HCT116 (cell line): ENCODE measurements at regions of chr2 and their contacts with region 1.

Region 1: DNA sequence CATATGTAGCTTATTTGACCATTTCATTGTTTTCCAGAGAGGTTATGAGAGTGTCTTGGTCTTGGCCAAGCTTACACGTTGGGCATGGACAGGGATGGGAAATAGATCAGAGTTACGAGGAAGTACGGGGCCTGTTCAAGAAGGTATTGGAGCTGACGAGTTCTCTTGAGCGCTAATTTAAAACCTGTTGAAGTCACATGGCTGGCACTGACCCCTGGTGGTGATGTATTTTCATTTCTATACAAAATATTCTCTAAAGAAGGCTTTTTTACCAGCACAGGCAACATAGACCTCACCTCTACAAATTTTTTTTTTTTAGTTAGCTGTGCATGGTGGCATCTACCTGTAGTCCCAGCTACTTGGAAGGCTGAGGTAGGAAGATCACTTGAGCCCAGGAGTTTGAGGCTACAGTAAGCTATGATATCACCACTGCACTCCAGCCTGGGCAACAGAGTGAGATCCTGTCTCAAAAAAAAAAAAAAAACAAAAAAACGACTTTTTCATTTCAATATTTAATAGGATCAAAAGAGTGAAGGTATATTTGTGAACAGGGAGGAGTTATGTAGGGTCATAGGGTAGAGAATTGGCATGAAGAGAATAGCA is 19.6 kb downstream of the UGP2 start:
- DNase-seq: peak; percentile 51
- ATAC-seq: peak; percentile 69
- H3K4me3 ChIP-seq: no peak overlapping the region
- H3K27ac ChIP-seq: no peak overlapping the region
- H3K4me1 ChIP-seq: peaks cover 11 to 17% of the 10 kb centered on the region in 2 experiments
- H3K27me3 ChIP-seq: no peaks in the 10 kb centered on the region
- CTCF ChIP-seq: peak; percentile 45 to 58 (median 57); a peak in 4 of 6 replicates
- POLR2A ChIP-seq: no peak
- RAD21 ChIP-seq: peak; percentile 69

Region 2: GRCh38 chr2:63588385-63589147 is 272.8 kb before region 1 on chr2 and contains the starts of genes MDH1 and WDPCP:
- CTCF ChIA-PET with region 1: no interaction called
- POLR2A ChIA-PET with region 1: no interaction called
- RAD21 ChIA-PET with region 1: no interaction called
- intact Hi-C with region 1: loop called (anchors 5 kb)
- DNase-seq: peak; percentile 100
- ATAC-seq: peak; percentile 91
- H3K4me3 ChIP-seq: peak within 1 kb of the TSS; percentile 71 to 89
- H3K27ac ChIP-seq: peak within 1 kb of the TSS; percentile 70
- H3K4me1 ChIP-seq: peaks cover 10 to 21% of the 10 kb centered on the region in 2 experiments; a peak in 3 of 4 replicates
- H3K27me3 ChIP-seq: no peaks in the 10 kb centered on the region
- CTCF ChIP-seq: no peak
- POLR2A ChIP-seq: peak; percentile 85
- RAD21 ChIP-seq: no peak; the same call in 1 of the 2 replicates
- total RNA-seq, gene MDH1: 192 TPM
- total RNA-seq, gene WDPCP: 4.1 TPM

Region 3: GRCh38 chr2:63692002-63692606 is 169.2 kb before region 1 on chr2:
- CTCF ChIA-PET with region 1: interaction called, 12 read pairs
- POLR2A ChIA-PET with region 1: no interaction called
- RAD21 ChIA-PET with region 1: interaction called in 1 of 2 experiments, 7 read pairs
- intact Hi-C with region 1: loop called (anchors 1 kb)
- DNase-seq: peak; percentile 31
- ATAC-seq: peak; percentile 67
- H3K4me3 ChIP-seq: no peak overlapping the region
- H3K27ac ChIP-seq: no peak overlapping the region
- H3K4me1 ChIP-seq: no peaks in the 10 kb centered on the region
- H3K27me3 ChIP-seq: no peaks in the 10 kb centered on the region
- CTCF ChIP-seq: peak; percentile 47 to 61 (median 60); a peak in 5 of 6 replicates
- POLR2A ChIP-seq: no peak
- RAD21 ChIP-seq: peak; percentile 76

Region 4: GRCh38 chr2:63698825-63699548 is 162.3 kb before region 1 on chr2:
- CTCF ChIA-PET with region 1: interaction called, 21 read pairs
- POLR2A ChIA-PET with region 1: interaction called, 3 read pairs
- RAD21 ChIA-PET with region 1: interaction called, 8 to 13 read pairs
- intact Hi-C with region 1: no loop called
- DNase-seq: peak; percentile 76
- ATAC-seq: peak; percentile 98
- H3K4me3 ChIP-seq: peak overlapping the region in 1 of 2 experiments; percentile 3; a peak in 2 of 4 replicates
- H3K27ac ChIP-seq: peak overlapping the region; percentile 12; the same call in 1 of the 2 replicates
- H3K4me1 ChIP-seq: peaks cover 10 to 19% of the 10 kb centered on the region in 2 experiments; a peak in 3 of 4 replicates
- H3K27me3 ChIP-seq: no peaks in the 10 kb centered on the region
- CTCF ChIP-seq: peak; percentile 52 to 75 (median 69); a peak in 5 of 6 replicates
- POLR2A ChIP-seq: peak; percentile 16
- RAD21 ChIP-seq: peak; percentile 74

Region 5: DNA sequence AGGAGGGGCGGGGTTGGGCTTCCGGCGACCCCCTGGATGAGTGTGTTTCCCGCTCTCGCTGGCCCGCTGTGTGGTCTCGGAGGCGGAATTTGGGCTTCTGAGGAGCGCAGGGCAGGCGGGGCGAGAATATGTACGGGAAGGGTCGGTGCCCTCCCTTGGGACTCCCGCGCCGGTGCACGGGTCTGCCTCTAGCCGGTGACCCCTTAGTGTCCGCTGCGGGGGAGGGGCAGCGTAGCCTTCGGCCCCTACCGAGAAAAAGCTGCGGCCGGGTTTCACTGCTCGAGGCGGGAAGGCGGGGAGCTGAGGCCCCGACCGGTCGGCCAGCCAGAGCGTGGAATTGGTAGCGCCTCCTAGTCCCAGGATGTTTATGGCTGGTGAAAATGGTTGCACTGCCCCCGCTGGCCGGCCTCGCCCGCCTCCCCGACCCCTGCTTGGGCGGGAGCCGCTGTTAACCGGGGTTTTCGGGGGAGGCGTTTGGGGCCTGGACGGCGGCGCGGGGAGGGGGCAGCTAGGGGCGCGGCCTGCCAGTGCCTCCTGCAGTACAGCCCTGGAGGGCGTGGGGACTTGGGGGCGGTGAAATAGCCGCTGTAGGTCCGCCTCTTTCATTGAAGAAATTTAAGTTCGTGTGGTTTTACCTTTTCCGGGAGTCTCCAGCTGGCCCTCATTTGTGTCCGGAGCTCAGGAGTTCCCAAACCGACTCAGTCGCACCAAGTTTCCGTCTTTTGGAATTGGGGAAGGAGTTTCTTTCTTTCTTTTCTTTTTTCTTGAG is 19.9 kb before region 1 on chr2 and contains the start of gene UGP2:
- CTCF ChIA-PET with region 1: interaction called, 16 read pairs
- POLR2A ChIA-PET with region 1: interaction called, 8 read pairs
- RAD21 ChIA-PET with region 1: no interaction called
- intact Hi-C with region 1: no loop called
- DNase-seq: peak; percentile 80
- ATAC-seq: peak; percentile 78
- H3K4me3 ChIP-seq: peak within 1 kb of the TSS; percentile 80 to 84
- H3K27ac ChIP-seq: peak within 1 kb of the TSS; percentile 94
- H3K4me1 ChIP-seq: peaks cover 7 to 18% of the 10 kb centered on the region in 2 experiments; a peak in 3 of 4 replicates
- H3K27me3 ChIP-seq: no peaks in the 10 kb centered on the region
- CTCF ChIP-seq: peak; percentile 17 to 21 (median 20); a peak in 3 of 6 replicates
- POLR2A ChIP-seq: no peak
- RAD21 ChIP-seq: no peak
- total RNA-seq, gene UGP2: 57.1 TPM

Region 6: DNA sequence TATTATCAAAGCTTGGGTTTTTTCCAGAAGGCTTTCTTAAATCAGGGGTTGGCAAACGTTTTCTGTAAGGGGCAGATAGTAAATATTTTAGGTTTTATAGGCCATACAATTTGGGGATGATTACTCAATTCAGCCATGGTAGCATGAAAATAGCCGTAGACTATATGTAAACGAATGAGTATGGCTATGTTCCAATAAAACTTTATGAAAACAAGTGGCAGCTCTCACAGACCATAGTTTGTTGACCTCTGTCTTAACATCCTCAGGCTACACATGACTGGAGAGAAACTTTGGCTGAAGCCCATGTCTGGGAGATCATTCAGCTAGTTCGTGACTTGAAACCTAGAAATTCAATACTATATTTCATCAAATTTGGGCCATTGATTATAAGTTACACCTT is 10.5 kb after region 1 on chr2:
- CTCF ChIA-PET with region 1: interaction called, 10 read pairs
- POLR2A ChIA-PET with region 1: no interaction called
- RAD21 ChIA-PET with region 1: no interaction called
- intact Hi-C with region 1: no loop called
- DNase-seq: no peak
- ATAC-seq: no peak
- H3K4me3 ChIP-seq: peak overlapping the region in 1 of 2 experiments; percentile 29; a peak in 1 of 4 replicates
- H3K27ac ChIP-seq: peak overlapping the region; percentile 72
- H3K4me1 ChIP-seq: peaks cover 17 to 25% of the 10 kb centered on the region in 2 experiments
- H3K27me3 ChIP-seq: no peaks in the 10 kb centered on the region
- CTCF ChIP-seq: no peak
- POLR2A ChIP-seq: no peak
- RAD21 ChIP-seq: no peak

Region 7: DNA sequence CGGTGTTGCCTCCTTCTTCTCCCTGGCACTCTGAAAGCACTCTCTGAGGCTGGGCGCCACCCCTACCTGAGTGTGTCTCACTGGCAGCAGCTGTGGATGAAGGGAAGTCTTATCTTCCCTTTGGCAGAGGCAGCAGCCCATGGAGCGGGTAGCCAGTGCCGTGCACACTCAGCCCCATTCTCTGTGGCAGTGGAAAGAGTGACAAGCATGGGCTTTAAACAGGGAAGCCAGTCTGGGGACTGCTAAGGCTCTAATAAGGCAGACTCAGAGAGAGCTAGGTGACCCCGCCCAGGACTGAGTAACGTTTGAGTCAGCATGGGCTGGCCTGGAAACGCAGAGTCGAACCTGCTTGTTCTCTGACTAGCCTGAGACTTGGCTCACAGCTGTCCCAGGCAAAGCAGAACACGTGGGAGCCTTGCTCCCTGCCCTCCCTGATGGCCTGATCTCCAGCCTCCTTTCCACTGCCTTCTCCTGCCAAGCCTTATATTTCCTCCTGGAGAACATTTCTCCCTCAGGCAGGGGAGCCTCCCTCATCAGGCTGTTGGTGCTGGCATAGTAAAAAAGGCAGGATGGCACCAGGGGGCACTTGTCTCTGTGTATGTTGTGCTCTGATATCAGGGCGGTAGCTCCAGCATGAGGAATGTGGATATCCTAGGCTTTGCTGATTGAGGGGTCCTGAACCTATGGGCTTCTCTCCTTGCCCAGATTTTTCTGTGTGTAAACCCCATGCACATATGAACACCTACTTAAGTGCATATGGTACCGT is 498.8 kb after region 1 on chr2:
- CTCF ChIA-PET with region 1: no interaction called
- POLR2A ChIA-PET with region 1: no interaction called
- RAD21 ChIA-PET with region 1: no interaction called
- intact Hi-C with region 1: no loop called
- DNase-seq: peak; percentile 92
- ATAC-seq: peak; percentile 93
- H3K4me3 ChIP-seq: peak overlapping the region in 1 of 2 experiments; percentile 42; a peak in 2 of 4 replicates
- H3K27ac ChIP-seq: peak overlapping the region; percentile 38
- H3K4me1 ChIP-seq: peaks cover 22 to 60% of the 10 kb centered on the region in 2 experiments
- H3K27me3 ChIP-seq: no peaks in the 10 kb centered on the region
- CTCF ChIP-seq: peak in 2 of 3 experiments; percentile 29 to 42; a peak in 3 of 6 replicates
- POLR2A ChIP-seq: no peak
- RAD21 ChIP-seq: no peak